ENCODE measurements at regions of chr1 and their contacts with region 1.

Region 1: DNA sequence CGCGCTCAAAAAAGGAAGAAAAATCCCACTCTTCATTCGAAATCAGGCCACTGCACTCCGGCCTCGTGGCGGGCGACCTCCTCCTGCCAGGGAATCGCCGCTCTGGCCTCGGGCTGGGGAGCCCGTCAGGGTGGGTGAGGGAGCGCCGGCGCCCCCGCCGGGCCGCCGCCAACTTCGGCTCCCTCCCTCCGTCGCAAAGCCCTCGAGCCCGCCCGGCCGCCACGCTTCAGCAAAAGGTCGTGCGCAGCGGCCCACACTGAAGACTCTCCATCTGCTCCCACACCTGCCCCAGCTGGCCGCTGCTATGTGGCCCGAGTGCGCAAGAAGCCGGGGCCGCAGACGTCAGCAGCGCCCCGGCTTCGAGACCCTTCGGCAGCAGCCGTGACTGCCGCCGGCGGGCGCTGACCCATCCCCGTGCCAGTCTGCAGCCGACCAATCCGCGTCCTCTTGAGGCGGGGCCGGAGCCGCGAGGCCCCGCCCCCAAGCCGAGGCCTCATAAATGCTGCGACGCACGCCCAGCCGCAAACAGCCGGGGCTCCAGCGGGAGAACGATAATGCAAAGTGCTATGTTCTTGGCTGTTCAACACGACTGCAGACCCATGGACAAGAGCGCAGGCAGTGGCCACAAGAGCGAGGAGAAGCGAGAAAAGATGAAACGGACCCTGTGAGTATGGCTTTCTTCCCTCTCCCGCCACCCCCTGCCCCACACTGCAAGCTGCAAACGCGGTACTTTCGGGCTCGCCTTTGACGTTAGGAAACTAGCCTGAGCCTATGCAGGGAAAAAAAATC is at the start of gene RGS2:
- DNase-seq: peak; percentile 94

Region 2: DNA sequence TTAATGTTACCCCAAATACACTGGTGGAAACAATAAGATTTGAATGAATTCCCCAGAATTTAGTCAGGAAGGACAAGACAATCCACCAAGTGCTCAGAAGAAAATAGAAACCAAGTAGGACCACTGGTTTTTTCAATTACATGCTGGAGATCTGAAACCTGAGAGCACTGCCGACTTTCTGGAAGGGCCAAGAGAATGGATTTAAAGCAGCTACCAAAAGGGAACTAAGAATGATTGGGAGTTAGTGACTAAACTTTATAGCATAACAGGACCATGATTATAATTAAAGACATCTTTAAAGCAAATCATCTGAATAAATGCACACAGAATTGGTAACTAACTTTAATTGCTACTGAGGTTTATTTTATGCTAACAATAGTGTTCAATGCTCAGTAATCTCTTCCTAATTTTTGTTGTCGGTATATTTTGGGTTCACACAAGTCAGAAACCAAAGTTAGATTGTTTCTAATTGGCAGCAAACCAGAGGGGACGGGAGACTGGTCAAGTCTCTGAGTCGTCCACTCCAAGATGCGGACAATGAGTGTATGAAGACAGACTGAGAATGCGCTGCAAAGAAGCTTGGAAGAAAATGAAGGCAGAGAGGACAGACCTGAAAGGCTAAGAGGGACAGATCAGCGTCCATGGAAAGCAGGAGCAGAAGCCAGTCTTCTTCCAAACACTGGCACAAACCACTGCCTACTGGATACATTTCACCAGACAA is 175.0 kb before region 1 on chr1:
- in situ Hi-C with region 1: no loop called
- DNase-seq: no peak

Region 3: DNA sequence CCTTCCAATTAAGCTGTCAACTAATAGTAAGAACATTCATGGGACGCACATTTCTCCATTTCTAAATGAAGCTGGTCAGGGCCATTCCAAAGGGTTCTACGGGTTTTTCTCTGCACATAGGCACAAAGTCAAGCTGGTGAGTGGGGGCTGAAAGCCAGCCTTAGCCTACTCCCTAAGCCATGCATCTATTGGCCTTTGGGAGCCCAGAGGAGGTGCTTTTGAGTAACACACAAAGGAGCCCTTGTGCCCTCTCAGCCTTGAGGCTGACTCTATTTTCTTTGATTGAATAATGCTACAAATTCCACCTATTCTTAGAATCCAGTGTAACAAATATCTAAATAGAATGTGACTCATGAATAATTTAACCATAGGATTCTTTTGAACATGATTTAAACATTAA is 99.2 kb before region 1 on chr1:
- in situ Hi-C with region 1: no loop called
- DNase-seq: no peak

Region 4: GRCh38 chr1:193019442-193020026 is 210.8 kb after region 1 on chr1:
- in situ Hi-C with region 1: loop called (anchors 25 kb)
- DNase-seq: peak; percentile 73

Measured in ACHN (cell line).